OCI-LY7 (cell line): ENCODE measurements at regions of chr2 and their contacts with region 1.

Region 1: DNA sequence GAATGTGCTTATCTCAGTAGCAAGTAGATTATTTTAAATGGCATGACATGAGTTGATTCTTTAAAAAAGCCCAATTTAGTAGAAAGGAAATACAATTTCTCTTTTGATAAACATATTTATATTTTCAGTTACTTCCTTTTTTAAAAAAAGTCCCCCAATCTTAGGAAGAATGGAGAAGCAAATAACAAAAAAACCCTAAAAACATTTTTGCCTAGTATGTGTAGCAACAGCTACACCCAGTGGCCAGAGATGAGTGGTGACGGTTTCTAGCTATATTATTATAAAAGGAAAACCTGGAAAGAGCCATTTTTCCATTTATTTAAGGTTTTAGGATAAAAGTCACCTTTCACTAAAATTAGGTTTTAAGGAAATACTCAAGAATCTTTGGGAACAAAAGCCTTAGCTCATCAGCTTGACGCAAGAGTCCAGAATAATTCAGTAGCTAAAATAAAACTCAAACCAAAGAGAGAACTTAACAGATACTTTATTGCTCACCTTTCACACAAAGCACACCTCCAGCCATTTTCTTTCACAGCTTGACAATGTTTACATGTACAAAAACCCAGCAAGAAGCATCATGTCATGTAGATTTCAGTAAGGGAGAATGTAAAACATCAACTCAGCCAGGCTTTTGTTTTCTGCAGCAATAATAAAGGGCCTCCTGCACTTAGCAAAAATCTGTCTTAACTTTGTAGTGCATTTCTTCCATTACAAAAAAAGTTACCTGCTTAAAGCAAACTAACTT is 15.7 kb downstream of the FAM98A start:
- DNase-seq: peak; percentile 53
- H3K4me3 ChIP-seq: no peak overlapping the region
- H3K27ac ChIP-seq: no peak overlapping the region
- H3K4me1 ChIP-seq: peaks cover 3% of the 10 kb centered on the region
- CTCF ChIP-seq: peak; percentile 99

Region 2: DNA sequence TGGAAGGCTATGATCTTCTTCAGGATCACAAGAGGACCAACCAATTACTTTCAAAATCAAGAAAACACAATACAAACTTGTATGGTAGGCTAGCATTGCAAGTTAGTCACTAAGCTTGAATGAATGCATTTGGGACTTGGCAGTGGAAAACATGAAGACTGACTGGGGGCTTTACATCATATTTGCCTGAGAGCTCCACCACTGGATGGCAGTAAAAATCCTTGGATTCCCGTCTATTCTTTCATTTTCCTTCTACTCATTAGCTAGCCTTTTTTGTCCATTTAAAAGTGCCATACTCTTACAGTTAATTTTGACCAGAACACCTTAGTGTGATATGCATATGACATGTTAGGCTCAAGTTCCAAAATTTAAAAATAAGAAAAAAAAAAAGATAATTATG is 170.4 kb before region 1 on chr2:
- CTCF ChIA-PET with region 1: no interaction called
- POLR2A ChIA-PET with region 1: no interaction called
- intact Hi-C with region 1: loop called (anchors 10 kb)
- DNase-seq: no peak
- H3K4me3 ChIP-seq: no peak overlapping the region
- H3K27ac ChIP-seq: no peak overlapping the region
- H3K4me1 ChIP-seq: no peaks in the 10 kb centered on the region
- CTCF ChIP-seq: peak; percentile 65